CD14-positive monocyte (primary cell): ENCODE measurements at regions of chr7 and their contacts with region 1.

Region 1: DNA sequence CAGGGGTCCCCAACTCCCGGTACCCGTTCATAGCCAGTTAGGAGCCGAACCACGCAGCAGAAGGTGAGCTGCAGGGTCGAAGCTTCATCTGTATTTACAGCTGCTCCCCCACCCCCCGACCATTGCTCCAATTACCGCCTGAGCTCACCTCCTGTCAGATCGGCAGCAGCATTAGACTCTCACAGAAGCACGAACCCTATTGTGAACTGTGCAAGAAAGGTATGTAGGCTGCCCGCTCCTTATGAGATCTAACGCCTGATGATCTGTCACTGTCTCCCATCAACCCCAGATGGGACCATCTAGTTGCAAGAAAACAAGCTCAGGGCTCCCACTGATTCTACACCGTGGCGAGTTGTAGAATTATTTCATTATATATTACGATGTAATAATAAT is 14.6 kb upstream of the AZGP1 start:
- DNase-seq: no peak
- H3K4me3 ChIP-seq: no peak overlapping the region
- H3K4me3 Mint-ChIP-seq: peak overlapping the region in 1 of 2 donors; percentile 35
- H3K27ac ChIP-seq: no peak overlapping the region
- H3K27ac Mint-ChIP-seq: no peak overlapping the region
- H3K4me1 ChIP-seq: peaks cover 5 to 11% of the 10 kb centered on the region in 2 donors
- H3K4me1 Mint-ChIP-seq: peaks cover 20% of the 10 kb centered on the region
- H3K27me3 ChIP-seq: peaks cover 0 to 3% of the 10 kb centered on the region in 2 donors
- H3K27me3 Mint-ChIP-seq: peaks cover 5 to 16% (median 6%) of the 10 kb centered on the region in 3 donors
- CTCF ChIP-seq: no peak

Region 2: DNA sequence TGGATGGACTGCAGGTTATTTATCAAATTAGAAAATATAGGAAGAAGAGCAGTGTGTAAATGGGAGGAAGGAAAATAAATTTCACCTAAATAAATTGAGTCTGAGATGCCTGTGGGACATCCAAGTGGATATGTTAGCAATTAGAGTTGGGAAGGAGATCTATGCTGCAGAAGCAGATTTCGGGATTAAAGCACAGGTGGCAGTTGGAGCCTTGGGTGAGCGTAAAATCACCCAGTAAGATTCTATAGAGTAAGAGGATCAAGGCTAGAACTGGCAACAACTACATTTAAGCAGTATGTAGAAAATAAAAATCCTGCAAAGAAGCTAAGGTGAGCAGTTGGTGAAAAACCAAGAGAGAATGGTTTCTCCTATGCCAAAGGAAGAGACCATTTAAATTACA is 79.5 kb before region 1 on chr7:
- intact Hi-C with region 1: loop called (anchors 2 kb)
- DNase-seq: no peak
- H3K4me3 ChIP-seq: no peak overlapping the region
- H3K4me3 Mint-ChIP-seq: no peak overlapping the region
- H3K27ac ChIP-seq: no peak overlapping the region
- H3K27ac Mint-ChIP-seq: no peak overlapping the region
- H3K4me1 ChIP-seq: peaks cover 0 to under 1% of the 10 kb centered on the region in 2 donors
- H3K4me1 Mint-ChIP-seq: peaks cover under 1% of the 10 kb centered on the region
- H3K27me3 ChIP-seq: no peaks in the 10 kb centered on the region
- H3K27me3 Mint-ChIP-seq: peaks cover 0 to 3% (median 0%) of the 10 kb centered on the region in 3 donors
- CTCF ChIP-seq: no peak

Region 3: GRCh38 chr7:99975782-99976521 is 14.5 kb before region 1 on chr7 and contains the start of gene AZGP1:
- intact Hi-C with region 1: no loop called
- DNase-seq: no peak
- H3K4me3 ChIP-seq: no peak within 1 kb of the TSS
- H3K4me3 Mint-ChIP-seq: no peak within 1 kb of the TSS
- H3K27ac ChIP-seq: no peak within 1 kb of the TSS
- H3K27ac Mint-ChIP-seq: peak within 1 kb of the TSS in 1 of 7 donors; percentile 59
- H3K4me1 ChIP-seq: no peaks in the 10 kb centered on the region
- H3K4me1 Mint-ChIP-seq: no peaks in the 10 kb centered on the region
- H3K27me3 ChIP-seq: no peaks in the 10 kb centered on the region
- H3K27me3 Mint-ChIP-seq: peaks cover 9 to 18% (median 18%) of the 10 kb centered on the region in 3 donors
- CTCF ChIP-seq: no peak
- polyA plus RNA-seq, gene AZGP1: not detected